Left cardiac atrium (tissue), 4 donors: ENCODE measurements at regions of chr2 and their contacts with region 1.

Region 1: GRCh38 chr2:217650716-217651360 is 352.0 kb downstream of the TNS1 start:
- DNase-seq: no peak
- ATAC-seq: peak; percentile 43 to 71

Region 2: GRCh38 chr2:217075268-217076057 is 575.4 kb before region 1 on chr2:
- intact Hi-C with region 1: no loop called
- DNase-seq: peak; percentile 65
- ATAC-seq: peak; percentile 71 to 93

Region 3: GRCh38 chr2:217521820-217522219 is 129.0 kb before region 1 on chr2:
- intact Hi-C with region 1: loop called in 1 of 2 experiments (anchors 5 kb)
- DNase-seq: no peak
- ATAC-seq: peak in 1 of 2 donors; percentile 4

Region 4: GRCh38 chr2:217713395-217714286 is 62.8 kb after region 1 on chr2:
- intact Hi-C with region 1: loop called in 1 of 2 experiments (anchors 10 kb)
- DNase-seq: peak; percentile 76
- ATAC-seq: peak; percentile 82 to 84

Region 5: DNA sequence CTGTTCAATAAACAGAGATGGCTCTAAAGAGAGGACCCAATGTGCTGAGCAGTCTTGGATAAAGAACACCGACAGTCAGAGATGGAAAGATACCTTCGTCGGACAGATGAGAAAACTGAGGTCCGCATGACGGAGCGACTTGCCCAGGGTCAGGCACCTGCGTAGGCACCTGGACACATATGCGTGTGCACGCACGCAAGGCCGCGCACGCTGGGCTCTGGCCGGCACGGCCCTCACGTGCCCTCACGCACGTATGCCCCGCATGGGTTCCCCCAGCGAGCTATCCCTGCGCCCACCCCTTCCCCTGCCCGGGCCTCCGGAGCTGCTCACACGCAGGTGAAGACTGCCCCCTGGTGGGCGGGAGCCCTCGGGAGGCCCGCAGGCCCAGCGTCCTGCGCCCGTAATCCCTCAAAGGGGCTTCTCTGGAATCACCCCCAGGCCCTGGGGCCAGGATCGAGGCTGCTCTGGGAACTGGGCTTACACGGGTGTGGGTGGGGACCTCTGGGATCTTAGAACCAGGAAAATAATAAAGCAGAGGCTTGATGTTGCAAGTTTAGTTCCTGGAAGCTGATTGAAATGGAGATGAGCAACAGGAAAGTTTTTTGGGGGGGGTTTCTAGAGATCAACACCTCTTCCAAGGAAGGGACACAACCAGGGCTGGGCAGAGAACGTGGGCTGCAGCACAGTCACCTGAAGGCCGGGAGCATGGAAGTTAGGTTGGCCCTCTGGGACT is 105.7 kb after region 1 on chr2:
- intact Hi-C with region 1: loop called in 1 of 2 experiments (anchors 5 kb)
- DNase-seq: peak; percentile 77
- ATAC-seq: peak; percentile 86 to 90